ENCODE measurements at regions of chr1 and their contacts with region 1.

Region 1: DNA sequence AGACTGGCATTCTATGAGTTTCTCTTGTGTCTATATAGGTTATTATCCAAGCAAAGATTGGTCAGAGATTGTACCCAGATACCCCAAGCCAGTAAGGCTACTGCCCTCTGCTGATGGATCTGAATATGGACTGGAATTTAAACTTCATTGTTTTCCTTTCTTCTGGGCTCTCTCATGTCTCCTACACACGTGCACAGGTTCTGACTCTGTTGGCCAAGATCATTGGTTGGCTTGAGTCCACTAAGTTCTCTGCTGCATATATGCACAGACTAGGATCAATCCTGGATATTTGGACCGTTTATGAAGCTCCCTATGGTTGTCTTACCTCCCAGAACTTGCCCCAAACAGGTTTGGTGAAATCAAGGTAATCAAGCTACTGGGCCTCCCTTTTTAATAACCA is 69.7 kb downstream of the CC2D1B start:
- DNase-seq: peak in 1 of 2 donors; percentile 73
- H3K4me3 ChIP-seq: no peak overlapping the region
- H3K27ac ChIP-seq: no peak overlapping the region
- H3K4me1 ChIP-seq: no peaks in the 10 kb centered on the region
- H3K27me3 ChIP-seq: no peaks in the 10 kb centered on the region
- CTCF ChIP-seq: peak in 5 of 7 experiments; percentile 44 to 79 (median 60)
- EP300 ChIP-seq: no peak
- POLR2A ChIP-seq: no peak

Region 2: GRCh38 chr1:52127181-52128180 is 168.9 kb before region 1 on chr1:
- intact Hi-C with region 1: loop called (anchors 5 kb)
- DNase-seq: peak in 1 of 2 donors; percentile 86
- H3K4me3 ChIP-seq: no peak overlapping the region
- H3K27ac ChIP-seq: no peak overlapping the region
- H3K4me1 ChIP-seq: peaks cover 0 to 4% (median 0%) of the 10 kb centered on the region in 4 donors
- H3K27me3 ChIP-seq: no peaks in the 10 kb centered on the region
- CTCF ChIP-seq: peak in 5 of 7 experiments; percentile 46 to 61 (median 59)
- EP300 ChIP-seq: no peak
- POLR2A ChIP-seq: no peak

Region 3: DNA sequence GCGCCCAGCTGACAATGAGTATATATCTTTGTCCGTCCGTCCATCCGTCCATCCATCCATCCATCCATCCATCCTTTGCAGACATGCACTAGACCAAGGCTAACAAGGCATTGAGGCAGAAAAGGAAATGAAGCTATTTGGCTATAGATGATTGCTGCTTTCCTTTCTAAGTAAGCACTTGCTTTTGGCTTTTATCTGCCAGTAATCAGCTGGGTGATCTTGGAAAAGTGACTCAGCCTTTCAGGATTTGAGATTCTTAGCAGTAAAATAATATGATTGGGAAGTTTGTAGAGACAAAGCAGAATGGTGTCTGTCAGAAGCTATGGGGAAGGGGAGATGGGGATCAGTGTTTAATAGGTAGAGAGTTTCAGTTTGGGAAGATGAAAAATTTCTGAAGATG is 131.7 kb before region 1 on chr1:
- intact Hi-C with region 1: no loop called
- DNase-seq: no peak
- H3K4me3 ChIP-seq: no peak overlapping the region
- H3K27ac ChIP-seq: no peak overlapping the region
- H3K4me1 ChIP-seq: peaks cover 0 to under 1% (median 0%) of the 10 kb centered on the region in 4 donors
- H3K27me3 ChIP-seq: no peaks in the 10 kb centered on the region
- CTCF ChIP-seq: no peak
- EP300 ChIP-seq: no peak
- POLR2A ChIP-seq: no peak